IMR-90 (cell line): ENCODE measurements at regions of chr2 and their contacts with region 1.

Region 1: GRCh38 chr2:230712443-230713330 is at the start of gene CAB39:
- DNase-seq: peak; percentile 86
- ATAC-seq: peak; percentile 93
- H3K4me3 ChIP-seq: peak within 1 kb of the TSS; percentile 65
- H3K27ac ChIP-seq: peak within 1 kb of the TSS; percentile 91
- H3K4me1 ChIP-seq: peaks cover 10% of the 10 kb centered on the region
- H3K27me3 ChIP-seq: no peaks in the 10 kb centered on the region; the same call in 1 of the 2 replicates
- CTCF ChIP-seq: peak; percentile 97
- POLR2A ChIP-seq: peak; percentile 87
- RAD21 ChIP-seq: peak; percentile 61
- total RNA-seq, gene CAB39: 71.7 and 95.3 TPM in 2 replicates

Region 2: GRCh38 chr2:230411570-230412370 is 300.9 kb before region 1 on chr2:
- CTCF ChIA-PET with region 1: no interaction called
- POLR2A ChIA-PET with region 1: no interaction called
- dilution Hi-C with region 1: no loop called
- in situ Hi-C with region 1: no loop called
- intact Hi-C with region 1: loop called (anchors 5 kb)
- DNase-seq: peak; percentile 64
- ATAC-seq: peak; percentile 86
- H3K4me3 ChIP-seq: peak overlapping the region; percentile 72
- H3K27ac ChIP-seq: peak overlapping the region; percentile 92
- H3K4me1 ChIP-seq: peaks cover 13% of the 10 kb centered on the region
- H3K27me3 ChIP-seq: no peaks in the 10 kb centered on the region
- CTCF ChIP-seq: no peak; the same call in 1 of the 2 replicates
- POLR2A ChIP-seq: peak; percentile 56; the same call in 1 of the 2 replicates
- RAD21 ChIP-seq: no peak

Region 3: DNA sequence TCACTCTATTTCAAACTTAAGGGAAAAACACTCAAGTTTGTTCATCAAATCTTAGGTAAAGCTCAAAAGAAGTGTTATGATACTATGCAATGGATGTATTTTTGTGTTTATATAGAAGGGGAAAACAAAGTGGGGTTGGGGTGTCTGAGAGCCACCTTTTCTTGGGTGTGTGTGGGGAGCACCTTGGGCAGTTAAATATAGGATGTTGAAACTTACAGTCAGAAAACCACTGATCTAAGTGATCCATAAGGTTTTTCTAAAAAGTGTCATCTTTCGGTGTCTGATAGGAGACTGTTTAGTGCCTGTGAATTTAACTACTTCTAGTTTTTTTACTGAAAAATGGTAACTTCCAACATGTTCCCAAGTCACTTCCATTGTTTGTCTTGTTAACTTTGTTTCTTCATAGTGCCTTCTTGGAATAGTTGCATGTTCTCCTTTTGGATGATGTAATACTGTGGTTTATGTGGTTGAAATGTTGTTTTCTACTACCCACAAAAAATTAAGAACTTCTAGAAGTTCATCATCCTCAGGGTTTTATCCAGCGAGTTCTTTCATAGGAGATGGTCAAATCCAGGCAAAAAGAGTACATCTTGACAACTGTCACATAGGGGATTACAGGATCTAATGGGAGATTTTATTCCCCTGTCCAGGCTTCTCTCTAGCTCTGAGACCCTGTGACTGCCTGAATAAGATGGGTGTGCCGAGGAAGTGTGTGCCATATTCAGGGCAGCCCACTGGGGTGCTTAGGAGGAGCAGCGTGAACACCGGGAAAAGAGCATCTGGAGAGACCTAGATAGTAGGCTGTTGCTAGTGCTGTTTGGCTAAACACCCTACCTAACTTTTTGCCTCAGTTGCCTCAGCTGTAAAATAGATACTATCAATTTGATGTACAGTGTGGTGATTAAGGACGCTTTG is 46.1 kb after region 1 on chr2:
- CTCF ChIA-PET with region 1: no interaction called
- POLR2A ChIA-PET with region 1: no interaction called
- dilution Hi-C with region 1: no loop called
- in situ Hi-C with region 1: no loop called
- intact Hi-C with region 1: loop called (anchors 5 kb)
- DNase-seq: peak; percentile 94
- ATAC-seq: peak; percentile 69
- H3K4me3 ChIP-seq: no peak overlapping the region
- H3K27ac ChIP-seq: peak overlapping the region; percentile 90; the same call in 1 of the 2 replicates
- H3K4me1 ChIP-seq: peaks cover 22% of the 10 kb centered on the region
- H3K27me3 ChIP-seq: no peaks in the 10 kb centered on the region
- CTCF ChIP-seq: no peak
- POLR2A ChIP-seq: no peak
- RAD21 ChIP-seq: no peak

Region 4: DNA sequence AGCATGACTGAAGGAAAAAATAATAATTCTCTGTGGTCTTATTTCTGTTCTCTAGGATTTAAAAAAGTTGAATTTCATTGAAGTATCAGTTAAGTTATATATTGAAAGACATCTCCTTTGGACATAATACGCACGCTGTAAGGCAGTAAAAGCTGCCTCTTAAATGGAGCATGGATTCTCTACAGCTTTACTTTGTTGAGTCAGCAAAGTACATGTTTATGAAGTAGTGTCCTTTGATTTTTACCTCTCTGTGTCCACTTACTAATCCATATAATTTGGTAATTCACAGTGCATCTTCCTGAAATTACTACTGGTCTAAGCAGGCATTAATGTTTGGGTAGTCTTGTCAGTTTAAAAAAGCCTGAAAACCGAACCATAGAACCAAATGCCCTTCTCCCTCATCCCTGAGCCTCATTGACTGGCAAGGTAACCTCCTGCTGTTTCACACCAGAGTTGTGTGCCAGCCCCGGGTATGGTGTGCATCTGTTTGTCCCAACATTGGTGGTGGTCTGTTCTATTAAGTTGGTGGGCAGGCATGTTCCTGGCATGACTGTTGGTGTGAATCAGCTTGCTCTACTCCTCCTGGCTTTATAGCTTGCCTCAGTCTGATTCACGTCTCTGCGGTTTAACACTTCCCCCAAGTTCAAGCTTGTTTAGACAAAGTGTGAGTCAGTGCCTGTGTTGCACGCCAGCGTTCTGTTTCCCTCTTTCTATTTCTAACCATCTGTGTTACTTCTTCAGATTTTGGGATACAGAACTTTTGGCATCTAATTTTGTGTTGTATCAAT is 81.1 kb after region 1 on chr2:
- CTCF ChIA-PET with region 1: interaction called, 11 read pairs
- POLR2A ChIA-PET with region 1: interaction called, 7 read pairs
- dilution Hi-C with region 1: no loop called
- in situ Hi-C with region 1: no loop called
- intact Hi-C with region 1: loop called (anchors 1 kb)
- DNase-seq: peak; percentile 100
- ATAC-seq: peak; percentile 87
- H3K4me3 ChIP-seq: no peak overlapping the region
- H3K27ac ChIP-seq: peak overlapping the region; percentile 86
- H3K4me1 ChIP-seq: peaks cover 28% of the 10 kb centered on the region
- H3K27me3 ChIP-seq: no peaks in the 10 kb centered on the region
- CTCF ChIP-seq: no peak
- POLR2A ChIP-seq: peak; percentile 75; the same call in 1 of the 2 replicates
- RAD21 ChIP-seq: 0 out of 2 replicates have a peak, but pooled peaks have one; percentile 10

Region 5: DNA sequence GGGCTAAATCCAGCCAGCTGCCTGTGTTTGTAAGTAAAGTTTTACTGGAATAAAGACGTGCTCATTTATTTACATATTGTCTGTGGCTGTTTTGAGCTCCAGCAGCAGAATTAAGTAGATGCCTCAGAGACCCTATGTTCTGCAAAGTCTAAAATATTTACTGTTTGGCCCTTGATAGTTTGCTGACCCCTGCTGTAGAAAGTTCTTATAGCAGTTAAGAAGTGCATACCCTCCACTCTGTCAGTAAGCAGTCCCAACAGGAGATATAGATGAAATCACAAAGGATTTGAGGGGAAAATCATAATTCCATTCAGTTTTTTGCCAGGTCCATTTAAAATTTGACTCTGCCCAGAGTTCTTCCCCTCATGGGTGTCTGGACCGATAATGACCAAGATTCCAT is 101.9 kb after region 1 on chr2:
- CTCF ChIA-PET with region 1: interaction called, 7 read pairs
- POLR2A ChIA-PET with region 1: interaction called, 4 read pairs
- dilution Hi-C with region 1: no loop called
- in situ Hi-C with region 1: loop called (anchors 5 kb)
- intact Hi-C with region 1: loop called (anchors 5 kb)
- DNase-seq: peak; percentile 47
- ATAC-seq: peak; percentile 76
- H3K4me3 ChIP-seq: no peak overlapping the region
- H3K27ac ChIP-seq: no peak overlapping the region
- H3K4me1 ChIP-seq: peaks cover 6% of the 10 kb centered on the region
- H3K27me3 ChIP-seq: no peaks in the 10 kb centered on the region
- CTCF ChIP-seq: peak; percentile 54
- POLR2A ChIP-seq: no peak
- RAD21 ChIP-seq: peak; percentile 65

Region 6: GRCh38 chr2:230828272-230828961 is 115.7 kb after region 1 on chr2:
- CTCF ChIA-PET with region 1: no interaction called
- POLR2A ChIA-PET with region 1: no interaction called
- dilution Hi-C with region 1: no loop called
- in situ Hi-C with region 1: no loop called
- intact Hi-C with region 1: no loop called
- DNase-seq: no peak
- ATAC-seq: no peak
- H3K4me3 ChIP-seq: no peak overlapping the region
- H3K27ac ChIP-seq: no peak overlapping the region
- H3K4me1 ChIP-seq: no peaks in the 10 kb centered on the region
- H3K27me3 ChIP-seq: peaks cover 34% of the 10 kb centered on the region
- CTCF ChIP-seq: no peak
- POLR2A ChIP-seq: no peak
- RAD21 ChIP-seq: no peak